ENCODE measurements at regions of chr11 and their contacts with region 1.

Region 1: DNA sequence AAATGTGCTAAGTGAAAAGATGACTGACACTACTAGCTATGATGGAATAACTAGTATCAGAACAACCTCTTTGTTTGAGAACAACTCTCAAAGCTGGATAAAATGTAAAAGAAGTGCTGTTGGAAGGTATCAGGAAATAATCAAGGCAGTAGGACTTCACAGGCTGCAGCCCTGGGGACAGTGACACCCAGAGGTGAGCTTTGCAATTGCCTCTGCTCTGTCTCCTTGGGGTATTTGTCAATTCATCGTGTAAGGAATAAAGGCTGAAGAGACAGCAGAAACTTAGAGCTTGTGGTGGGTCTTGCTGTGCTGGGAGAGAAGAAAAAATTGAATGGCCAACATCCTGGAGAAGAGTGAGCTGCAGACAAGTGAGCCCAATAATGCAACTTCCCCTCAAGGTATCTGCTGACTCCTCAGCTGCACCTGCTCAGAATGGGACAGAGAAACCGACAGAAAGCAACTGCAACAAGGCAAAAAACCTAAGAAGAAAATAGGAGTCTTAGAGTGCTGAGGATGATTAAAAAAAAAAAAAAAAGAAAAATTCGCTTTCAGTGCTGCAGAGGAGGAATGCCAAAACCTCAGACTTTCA is 141.1 kb downstream of the RCN1 start:
- DNase-seq: no peak
- H3K4me3 ChIP-seq: no peak overlapping the region
- H3K27ac ChIP-seq: no peak overlapping the region
- H3K27me3 ChIP-seq: no peaks in the 10 kb centered on the region
- CTCF ChIP-seq: peak; percentile 68

Region 2: GRCh38 chr11:32213223-32213622 is 18.8 kb before region 1 on chr11:
- CTCF ChIA-PET with region 1: interaction called, 11 read pairs
- POLR2A ChIA-PET with region 1: no interaction called
- DNase-seq: peak; percentile 23
- H3K4me3 ChIP-seq: no peak overlapping the region
- H3K27ac ChIP-seq: no peak overlapping the region
- H3K27me3 ChIP-seq: no peaks in the 10 kb centered on the region
- CTCF ChIP-seq: no peak

Region 3: GRCh38 chr11:32244453-32244852 is 12.5 kb after region 1 on chr11:
- CTCF ChIA-PET with region 1: interaction called, 11 read pairs
- POLR2A ChIA-PET with region 1: no interaction called
- DNase-seq: no peak
- H3K4me3 ChIP-seq: no peak overlapping the region
- H3K27ac ChIP-seq: no peak overlapping the region
- H3K27me3 ChIP-seq: no peaks in the 10 kb centered on the region
- CTCF ChIP-seq: no peak